ENCODE measurements at regions of chr22 and their contacts with region 1.

Region 1: GRCh38 chr22:33920927-33921524 is 750 bp upstream of the LARGE1 start:
- DNase-seq: peak; percentile 99
- ATAC-seq: peak; percentile 88 to 94 (median 91)
- H3K4me3 ChIP-seq: peak overlapping the region; percentile 44 to 97 (median 78)
- H3K27ac ChIP-seq: peak overlapping the region; percentile 14 to 92 (median 84)
- H3K4me1 ChIP-seq: peaks cover 0 to 53% (median 28%) of the 10 kb centered on the region in 12 donors
- H3K27me3 ChIP-seq: peaks cover 0 to 28% (median 0%) of the 10 kb centered on the region in 9 donors
- CTCF ChIP-seq: no peak
- POLR2A ChIP-seq: peak; percentile 78 to 97

Region 2: GRCh38 chr22:33302049-33302545 is 618.9 kb before region 1 on chr22:
- intact Hi-C with region 1: loop called in 7 of 10 experiments (anchors 2 to 10 kb)
- DNase-seq: peak; percentile 77 to 89 (median 83)
- ATAC-seq: peak; percentile 83 to 91 (median 88)
- H3K4me3 ChIP-seq: peak overlapping the region in 5 of 12 donors; percentile 3 to 25 (median 11)
- H3K27ac ChIP-seq: peak overlapping the region in 8 of 12 donors; percentile 4 to 75 (median 65)
- H3K4me1 ChIP-seq: peaks cover 0 to 33% (median 10%) of the 10 kb centered on the region in 12 donors
- H3K27me3 ChIP-seq: no peaks in the 10 kb centered on the region
- CTCF ChIP-seq: peak; percentile 87 to 98 (median 94)
- POLR2A ChIP-seq: no peak

Region 3: GRCh38 chr22:33579448-33580093 is 341.5 kb before region 1 on chr22:
- intact Hi-C with region 1: loop called in 2 of 10 experiments (anchors 5 to 10 kb)
- DNase-seq: peak in 4 of 5 donors; percentile 65 to 70 (median 69)
- ATAC-seq: peak; percentile 88 to 92 (median 90)
- H3K4me3 ChIP-seq: no peak overlapping the region
- H3K27ac ChIP-seq: peak overlapping the region in 2 of 12 donors; percentile 13 to 37
- H3K4me1 ChIP-seq: peaks cover 0 to 34% (median 14%) of the 10 kb centered on the region in 12 donors
- H3K27me3 ChIP-seq: no peaks in the 10 kb centered on the region
- CTCF ChIP-seq: peak; percentile 77 to 98 (median 92)
- POLR2A ChIP-seq: no peak

Region 4: DNA sequence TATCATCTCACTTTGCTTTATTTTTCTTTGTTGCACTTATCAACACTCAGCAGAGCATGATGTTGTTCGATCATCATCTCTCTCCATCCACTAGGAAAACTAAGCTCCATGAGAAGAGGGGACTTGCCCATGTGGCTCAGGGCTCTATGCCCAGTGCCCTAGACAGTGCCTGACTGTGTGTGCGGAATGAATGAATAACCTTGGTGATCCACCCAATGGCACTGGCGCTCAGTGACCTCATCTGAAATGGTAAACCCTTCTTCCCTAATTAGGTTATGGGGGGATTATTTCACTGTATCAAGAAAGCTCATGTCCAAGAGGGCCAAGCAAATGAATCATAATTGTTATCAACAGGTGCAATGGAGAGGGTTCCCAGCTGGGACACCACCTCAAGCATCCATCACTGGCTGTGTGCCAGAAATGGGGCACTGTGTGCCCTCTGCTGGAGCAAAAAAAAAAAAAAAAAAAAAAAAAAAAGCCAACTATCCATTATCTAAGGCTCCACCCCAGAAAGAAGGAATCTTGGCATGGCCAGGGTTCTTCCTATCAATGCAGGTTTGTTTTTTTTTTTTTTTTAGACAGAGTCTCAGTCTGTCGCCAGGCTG is 173.3 kb before region 1 on chr22:
- intact Hi-C with region 1: loop called in 1 of 10 experiments (anchors 10 kb)
- DNase-seq: peak in 2 of 5 donors; percentile 27 to 47
- ATAC-seq: peak in 3 of 4 donors; percentile 11 to 37 (median 21)
- H3K4me3 ChIP-seq: no peak overlapping the region
- H3K27ac ChIP-seq: no peak overlapping the region
- H3K4me1 ChIP-seq: peaks cover 0 to 33% (median 8%) of the 10 kb centered on the region in 12 donors
- H3K27me3 ChIP-seq: no peaks in the 10 kb centered on the region
- CTCF ChIP-seq: peak in 1 of 12 donors; percentile 12
- POLR2A ChIP-seq: no peak

Region 5: DNA sequence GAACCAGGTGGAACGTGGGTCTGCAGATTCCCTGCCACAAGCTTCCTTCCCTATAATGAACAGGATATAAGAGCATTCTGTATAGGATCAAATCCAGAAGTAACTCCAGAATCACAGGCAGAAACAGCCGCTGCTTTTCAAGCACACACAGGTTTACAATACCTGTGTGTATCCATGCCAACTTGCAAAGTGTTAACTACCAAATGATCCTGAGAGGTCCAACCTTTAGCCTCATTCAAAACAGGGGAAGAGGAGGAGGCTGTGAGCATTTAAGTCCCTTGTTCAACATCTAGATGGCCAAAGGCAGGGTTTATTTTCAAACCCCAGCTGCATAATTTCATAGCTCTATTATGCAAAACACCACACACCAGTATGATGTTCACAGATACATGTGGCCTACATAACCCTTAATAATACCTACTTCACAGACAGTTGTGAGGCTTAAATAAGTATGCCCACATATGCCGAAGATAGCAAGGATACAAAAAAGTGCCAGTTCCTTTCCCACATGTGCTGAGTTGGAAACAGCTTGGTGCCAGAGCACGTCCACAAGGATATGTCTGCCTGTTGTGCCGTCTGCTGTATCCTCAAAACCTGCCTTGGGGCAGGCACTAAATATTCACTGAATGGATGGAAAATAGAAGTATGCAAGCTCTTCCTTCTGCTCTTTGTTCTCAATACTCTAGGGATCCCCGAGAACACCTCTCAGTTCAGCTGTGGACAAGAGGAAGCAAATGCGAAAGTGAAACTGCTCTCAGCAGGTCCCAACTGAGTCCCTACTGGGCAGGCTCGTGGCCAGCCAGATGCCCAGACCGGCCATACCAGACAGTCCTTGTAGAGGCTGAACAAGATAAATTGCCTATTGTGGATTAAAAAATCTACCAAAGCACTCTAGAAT is 67.6 kb before region 1 on chr22:
- intact Hi-C with region 1: loop called in 3 of 10 experiments (anchors 5 to 10 kb)
- DNase-seq: peak in 4 of 5 donors; percentile 67 to 79 (median 75)
- ATAC-seq: peak; percentile 89 to 95 (median 92)
- H3K4me3 ChIP-seq: peak overlapping the region; percentile 1 to 64 (median 50)
- H3K27ac ChIP-seq: peak overlapping the region in 11 of 12 donors; percentile 45 to 80 (median 69)
- H3K4me1 ChIP-seq: peaks cover 4 to 49% (median 34%) of the 10 kb centered on the region in 12 donors
- H3K27me3 ChIP-seq: no peaks in the 10 kb centered on the region
- CTCF ChIP-seq: no peak
- POLR2A ChIP-seq: no peak

Region 6: GRCh38 chr22:34105461-34106062 is 184.5 kb after region 1 on chr22:
- intact Hi-C with region 1: loop called (anchors 2 to 5 kb)
- DNase-seq: peak in 4 of 5 donors; percentile 31 to 62 (median 51)
- ATAC-seq: peak in 3 of 4 donors; percentile 72 to 82 (median 78)
- H3K4me3 ChIP-seq: no peak overlapping the region
- H3K27ac ChIP-seq: no peak overlapping the region
- H3K4me1 ChIP-seq: no peaks in the 10 kb centered on the region
- H3K27me3 ChIP-seq: peaks cover 0 to 11% (median 0%) of the 10 kb centered on the region in 9 donors
- CTCF ChIP-seq: peak; percentile 50 to 77 (median 68)
- POLR2A ChIP-seq: no peak

Region 7: GRCh38 chr22:34344702-34345101 is 423.7 kb after region 1 on chr22:
- intact Hi-C with region 1: loop called in 5 of 10 experiments (anchors 10 kb)
- DNase-seq: no peak
- ATAC-seq: peak; percentile 36 to 61 (median 50)
- H3K4me3 ChIP-seq: no peak overlapping the region
- H3K27ac ChIP-seq: no peak overlapping the region
- H3K4me1 ChIP-seq: no peaks in the 10 kb centered on the region
- H3K27me3 ChIP-seq: peaks cover 0 to 5% (median 0%) of the 10 kb centered on the region in 9 donors
- CTCF ChIP-seq: peak in 6 of 12 donors; percentile 20 to 43 (median 25)
- POLR2A ChIP-seq: no peak